ENCODE measurements at regions of chr10 and their contacts with region 1.

Region 1: GRCh38 chr10:106355450-106355849 is 809.1 kb downstream of the SORCS1 start:
- DNase-seq: no peak
- H3K27ac ChIP-seq: no peak overlapping the region
- CTCF ChIP-seq: no peak

Region 2: GRCh38 chr10:106255111-106255678 is 100.3 kb before region 1 on chr10:
- CTCF ChIA-PET with region 1: no interaction called
- POLR2A ChIA-PET with region 1: no interaction called
- DNase-seq: no peak
- H3K27ac ChIP-seq: no peak overlapping the region
- CTCF ChIP-seq: no peak

Region 3: GRCh38 chr10:106648534-106649481 is 293.4 kb after region 1 on chr10:
- CTCF ChIA-PET with region 1: no interaction called
- POLR2A ChIA-PET with region 1: interaction called, 11 read pairs
- DNase-seq: no peak
- H3K27ac ChIP-seq: no peak overlapping the region
- CTCF ChIP-seq: no peak

Region 4: DNA sequence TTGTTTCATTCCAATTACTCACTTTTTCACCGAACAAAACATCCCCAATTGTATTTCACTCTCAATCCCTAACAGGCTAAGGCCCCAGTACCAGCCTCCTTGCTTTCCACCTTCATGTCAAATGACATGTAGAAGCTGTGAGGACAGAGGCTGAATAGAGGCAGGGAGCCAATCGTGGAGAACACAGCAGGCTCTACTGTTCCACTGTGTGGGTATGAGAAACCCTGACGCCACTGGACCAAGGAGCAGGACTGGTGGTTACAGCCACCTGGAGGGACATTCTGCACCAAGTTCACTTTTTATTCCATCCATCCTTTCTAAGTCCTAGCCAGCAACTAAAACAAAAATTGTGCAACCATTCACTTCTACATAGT is 306.3 kb after region 1 on chr10:
- CTCF ChIA-PET with region 1: no interaction called
- POLR2A ChIA-PET with region 1: no interaction called
- DNase-seq: no peak
- H3K27ac ChIP-seq: no peak overlapping the region
- CTCF ChIP-seq: no peak